ENCODE measurements at regions of chr1 and their contacts with region 1.

Region 1: DNA sequence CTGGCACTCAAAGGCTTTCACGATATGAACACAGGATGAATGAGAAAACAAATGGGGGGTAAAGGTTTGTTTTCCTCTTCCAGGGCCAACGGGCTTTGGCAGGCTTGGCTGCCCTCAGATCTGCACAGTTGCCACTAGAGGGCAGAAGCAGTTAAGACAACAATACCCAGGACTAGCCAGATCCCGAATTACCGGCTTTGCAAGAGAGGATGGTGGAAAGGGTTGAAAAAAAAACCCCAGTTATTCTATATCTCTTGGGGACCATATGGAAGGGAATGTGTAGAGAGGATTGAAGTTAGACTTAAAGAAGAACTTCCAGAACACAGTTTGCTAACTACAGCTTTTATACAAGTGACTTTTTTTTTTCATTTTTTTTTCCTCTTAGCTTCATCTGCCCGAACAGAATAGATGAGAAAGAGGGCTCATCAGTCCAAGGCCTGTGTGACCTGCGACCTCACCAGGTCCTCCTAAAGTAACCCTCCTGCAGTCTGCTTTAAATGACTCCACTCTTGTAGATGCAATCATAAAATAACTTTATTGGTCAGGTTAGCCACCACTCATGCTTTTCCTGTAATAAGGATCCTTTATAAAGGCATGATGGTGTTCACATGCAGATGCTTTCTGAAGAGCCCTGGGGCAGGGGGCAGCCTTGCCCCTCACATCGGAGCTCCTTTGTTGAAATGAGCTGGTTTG is 10.7 kb downstream of the FMOD start:
- DNase-seq: peak; percentile 79 to 92
- ATAC-seq: peak; percentile 79 to 89; a peak in 5 of 6 replicates
- H3K4me3 ChIP-seq: no peak overlapping the region
- H3K27ac ChIP-seq: no peak overlapping the region
- H3K4me1 ChIP-seq: no peaks in the 10 kb centered on the region
- CTCF ChIP-seq: peak; percentile 90
- EP300 ChIP-seq: no peak
- POLR2A ChIP-seq: no peak
- RAD21 ChIP-seq: peak; percentile 89 to 91

Region 2: DNA sequence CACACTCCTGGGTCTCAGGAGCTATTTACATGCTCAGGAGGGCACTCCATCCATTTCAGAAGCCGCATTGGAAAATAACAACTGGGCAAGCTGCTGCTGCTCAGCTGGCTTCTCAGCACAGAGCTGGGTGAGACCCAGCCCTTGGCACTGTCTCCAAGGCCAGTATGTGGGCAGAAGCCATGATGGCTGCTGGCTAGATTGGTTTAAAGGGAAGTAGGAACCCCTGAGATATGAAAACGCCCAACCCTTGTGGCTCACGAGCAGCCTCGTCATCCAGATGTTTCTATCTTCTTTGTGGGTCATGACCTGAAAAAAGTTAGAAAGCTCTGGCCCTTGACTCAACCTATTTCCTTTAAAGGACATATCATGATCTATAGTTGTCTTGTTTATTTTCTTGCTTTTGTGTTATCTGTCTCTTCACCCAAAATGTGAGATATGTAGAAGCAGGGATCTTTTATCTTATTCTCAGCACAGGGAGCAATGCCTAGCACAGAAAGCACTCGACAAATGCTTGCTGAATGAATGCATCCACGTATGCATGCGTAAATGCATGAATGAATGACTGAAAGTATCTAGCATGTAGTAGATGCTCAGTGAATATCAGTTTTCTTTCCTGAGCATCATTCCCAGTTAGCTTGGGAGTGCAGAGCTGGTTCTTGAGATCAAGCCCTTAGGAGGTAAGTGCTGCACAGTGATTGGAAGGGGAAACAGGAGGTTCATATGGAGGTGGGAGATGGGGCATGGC is 176.2 kb before region 1 on chr1:
- CTCF ChIA-PET with region 1: no interaction called
- POLR2A ChIA-PET with region 1: no interaction called
- DNase-seq: no peak
- ATAC-seq: no peak
- H3K4me3 ChIP-seq: no peak overlapping the region
- H3K27ac ChIP-seq: no peak overlapping the region
- H3K4me1 ChIP-seq: no peaks in the 10 kb centered on the region
- CTCF ChIP-seq: no peak
- EP300 ChIP-seq: no peak
- POLR2A ChIP-seq: no peak
- RAD21 ChIP-seq: no peak

Region 3: GRCh38 chr1:203290261-203291089 is 49.8 kb before region 1 on chr1:
- CTCF ChIA-PET with region 1: interaction called, 17 read pairs
- POLR2A ChIA-PET with region 1: no interaction called
- DNase-seq: no peak
- ATAC-seq: no peak
- H3K4me3 ChIP-seq: no peak overlapping the region
- H3K27ac ChIP-seq: 0 out of 6 replicates have a peak overlapping the region, but pooled peaks of 1 of the 2 experiments have one; percentile 1
- H3K4me1 ChIP-seq: peaks cover 14% of the 10 kb centered on the region
- CTCF ChIP-seq: no peak
- EP300 ChIP-seq: no peak
- POLR2A ChIP-seq: no peak
- RAD21 ChIP-seq: no peak

Region 4: DNA sequence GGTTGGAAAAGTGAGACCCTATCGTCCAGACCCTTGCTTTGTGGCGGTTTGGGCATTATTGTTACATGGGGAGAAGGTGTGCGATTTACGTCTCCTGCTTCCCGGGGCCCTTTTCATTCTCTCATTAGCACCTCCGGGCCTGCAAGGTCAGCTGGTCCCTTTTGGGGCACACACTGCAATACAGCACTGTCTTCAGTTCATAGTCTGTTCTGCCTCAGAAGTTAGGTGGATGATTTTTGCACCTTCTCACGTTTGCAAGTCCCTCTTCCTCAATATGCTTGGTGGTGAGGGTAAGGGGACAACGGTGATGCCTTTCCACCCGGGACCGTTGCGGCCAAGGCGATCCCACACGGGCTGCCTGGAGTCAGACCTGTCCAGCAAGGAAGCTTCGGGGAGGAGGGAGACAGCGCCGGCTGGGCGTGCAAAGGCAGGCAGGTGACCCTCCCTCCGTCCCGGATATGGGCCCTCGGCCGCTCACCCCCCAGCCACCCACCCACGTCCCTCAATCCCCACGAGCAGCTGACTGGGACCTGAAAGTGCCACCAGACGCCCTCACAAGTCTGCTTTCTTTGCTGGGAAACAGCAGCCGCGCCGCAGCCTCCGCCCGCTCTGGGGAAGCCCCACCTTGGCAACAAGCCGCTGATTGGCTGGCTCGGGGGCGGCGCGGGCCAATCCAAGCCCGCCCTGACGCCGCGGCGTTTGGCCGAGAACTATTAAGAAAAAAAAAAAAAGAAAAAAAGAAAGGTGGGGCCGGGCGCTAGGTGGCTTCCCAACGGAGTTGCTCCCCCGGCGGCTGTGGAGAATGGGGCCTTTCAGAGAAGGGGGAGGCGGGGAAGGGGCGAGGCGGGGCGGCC is 13.2 kb before region 1 on chr1:
- CTCF ChIA-PET with region 1: interaction called, 77 read pairs
- POLR2A ChIA-PET with region 1: no interaction called
- DNase-seq: peak; percentile 87 to 95
- ATAC-seq: peak; percentile 86 to 97
- H3K4me3 ChIP-seq: peak overlapping the region; percentile 49
- H3K27ac ChIP-seq: peak overlapping the region; percentile 88 to 92
- H3K4me1 ChIP-seq: peaks cover 27% of the 10 kb centered on the region
- CTCF ChIP-seq: no peak
- EP300 ChIP-seq: no peak
- POLR2A ChIP-seq: peak; percentile 64
- RAD21 ChIP-seq: no peak

Region 5: DNA sequence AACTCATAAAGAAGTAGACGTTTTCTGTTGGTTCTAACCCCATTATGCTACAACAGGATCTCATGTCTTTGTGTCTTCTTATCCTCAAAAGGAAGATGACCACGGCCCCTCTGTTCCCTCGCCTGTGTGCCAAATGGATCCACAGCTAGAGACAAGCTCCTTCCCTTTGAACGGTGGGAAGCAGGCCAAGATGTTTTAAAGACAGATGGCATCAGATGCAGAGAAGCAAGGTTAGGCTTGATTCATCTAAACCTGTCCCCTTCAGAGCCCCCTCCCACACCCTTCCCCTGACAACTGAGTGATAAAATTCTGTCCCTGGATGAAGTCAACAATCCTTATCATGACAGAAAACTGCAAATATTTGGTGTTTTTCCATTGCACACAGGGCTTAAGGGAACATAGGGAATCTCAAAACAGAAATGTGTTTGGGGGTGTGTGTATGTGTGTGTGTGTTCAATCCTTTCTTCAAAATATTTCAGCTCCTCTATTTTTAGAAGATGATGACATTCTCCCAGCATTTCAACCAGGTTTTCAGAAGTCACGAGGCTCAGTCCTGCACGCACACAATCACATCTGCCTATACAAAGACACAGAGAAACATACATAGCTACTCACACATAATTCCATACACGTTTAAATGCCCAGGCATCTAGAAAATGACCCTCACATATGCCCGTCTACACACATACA is 38.4 kb after region 1 on chr1:
- CTCF ChIA-PET with region 1: interaction called, 11 read pairs
- POLR2A ChIA-PET with region 1: no interaction called
- DNase-seq: no peak
- ATAC-seq: no peak
- H3K4me3 ChIP-seq: no peak overlapping the region
- H3K27ac ChIP-seq: no peak overlapping the region
- H3K4me1 ChIP-seq: no peaks in the 10 kb centered on the region
- CTCF ChIP-seq: no peak
- EP300 ChIP-seq: no peak
- POLR2A ChIP-seq: no peak
- RAD21 ChIP-seq: no peak

Region 6: DNA sequence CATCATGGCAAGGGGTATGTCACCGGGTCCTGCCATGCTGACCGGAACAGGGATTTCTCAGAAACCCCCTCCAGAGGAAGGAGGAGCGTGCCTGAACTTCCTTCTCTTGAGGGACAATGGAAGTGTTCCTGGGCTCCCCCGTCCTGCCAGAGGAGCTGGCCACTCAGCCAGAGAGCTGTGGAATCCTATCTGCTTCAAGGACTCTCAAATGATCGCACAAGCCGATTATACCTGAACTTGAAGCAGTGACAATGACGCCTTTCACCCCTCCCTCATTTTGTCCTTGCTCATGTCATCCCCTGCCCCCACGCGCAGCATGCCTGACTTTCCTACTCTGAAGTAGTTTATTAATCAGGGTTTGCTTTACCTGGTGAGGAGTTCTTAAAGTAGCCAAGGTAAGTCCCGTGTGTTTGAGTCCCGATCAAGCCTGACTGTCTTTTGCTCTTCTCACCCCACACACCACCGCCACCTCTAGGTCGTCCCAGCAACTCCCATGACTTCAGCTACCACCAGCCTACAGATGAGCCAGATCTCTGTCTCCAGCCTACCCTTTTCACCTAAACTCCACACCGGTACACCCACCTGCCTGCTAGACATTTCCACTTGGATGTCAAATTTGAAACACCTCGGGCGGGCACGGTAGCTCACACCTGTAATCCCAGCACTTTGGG is 110.4 kb after region 1 on chr1:
- CTCF ChIA-PET with region 1: interaction called, 137 read pairs
- POLR2A ChIA-PET with region 1: no interaction called
- DNase-seq: peak in 1 of 2 experiments; percentile 7
- ATAC-seq: peak; percentile 54 to 63; a peak in 3 of 6 replicates
- H3K4me3 ChIP-seq: no peak overlapping the region
- H3K27ac ChIP-seq: no peak overlapping the region
- H3K4me1 ChIP-seq: no peaks in the 10 kb centered on the region
- CTCF ChIP-seq: no peak
- EP300 ChIP-seq: no peak
- POLR2A ChIP-seq: no peak
- RAD21 ChIP-seq: no peak

Measured in A549 (cell line).